Cardiac septum (tissue), 1 donor: ENCODE measurements at regions of chr12 and their contacts with region 1.

Region 1: GRCh38 chr12:12081836-12082497 is 11.2 kb downstream of the BCL2L14 start:
- DNase-seq: no peak

Region 2: DNA sequence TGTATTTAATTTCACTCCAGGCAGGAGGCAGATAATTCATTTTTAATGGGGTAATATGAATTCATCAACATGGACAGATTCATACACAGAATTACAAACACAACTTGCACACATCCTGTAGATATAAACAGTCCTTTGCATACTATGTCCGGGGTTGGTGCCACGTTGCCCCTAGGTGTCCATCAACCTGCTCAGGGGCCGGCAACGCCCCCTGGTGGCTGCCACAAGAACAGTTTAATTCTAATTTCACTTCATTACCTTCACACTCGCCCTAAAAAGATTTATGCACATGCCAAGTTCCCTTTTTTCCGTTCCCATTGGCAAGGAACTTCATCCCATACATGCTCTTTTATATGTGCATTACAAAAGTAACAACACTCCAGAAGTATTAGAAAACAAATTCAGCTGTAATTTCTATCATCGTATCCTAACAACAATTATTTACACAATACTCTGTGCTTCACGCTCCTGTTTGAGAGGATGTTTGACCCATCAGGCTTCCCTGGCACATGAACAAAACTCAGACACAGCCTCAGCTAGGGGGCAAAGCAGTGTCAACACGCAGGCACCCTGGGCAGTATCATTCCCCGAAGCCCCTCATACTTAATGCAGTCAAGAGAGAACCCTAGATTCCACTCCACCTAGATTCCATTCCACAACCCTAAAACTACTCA is 252.5 kb after region 1 on chr12:
- intact Hi-C with region 1: loop called (anchors 5 kb)
- DNase-seq: no peak